ENCODE measurements at regions of chrX and their contacts with region 1.

Region 1: DNA sequence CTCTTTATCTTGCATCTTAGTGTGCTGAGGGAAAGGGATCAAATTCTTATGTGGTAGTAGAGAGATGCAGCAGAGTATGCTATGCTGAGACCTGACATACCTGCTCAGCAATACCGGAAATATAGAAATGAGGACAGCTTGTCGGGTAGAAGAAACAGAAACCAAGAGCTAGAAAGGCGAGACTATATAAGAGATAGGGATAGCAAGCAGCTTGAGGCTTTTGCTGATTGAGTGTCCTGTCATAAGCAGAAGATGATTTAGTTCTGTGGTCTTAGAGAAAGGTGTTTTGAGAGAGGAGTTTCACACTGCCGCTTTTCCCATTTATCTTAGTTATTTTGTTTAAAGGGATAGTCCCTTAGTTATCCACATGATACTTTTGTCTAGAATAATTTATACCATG is 31.7 kb downstream of the USP9X start:
- DNase-seq: peak; percentile 71
- H3K4me3 Mint-ChIP-seq: peak overlapping the region; percentile 58
- H3K27ac Mint-ChIP-seq: peak overlapping the region; percentile 78
- H3K4me1 Mint-ChIP-seq: peaks cover 48% of the 10 kb centered on the region
- H3K27me3 Mint-ChIP-seq: no peaks in the 10 kb centered on the region

Region 2: DNA sequence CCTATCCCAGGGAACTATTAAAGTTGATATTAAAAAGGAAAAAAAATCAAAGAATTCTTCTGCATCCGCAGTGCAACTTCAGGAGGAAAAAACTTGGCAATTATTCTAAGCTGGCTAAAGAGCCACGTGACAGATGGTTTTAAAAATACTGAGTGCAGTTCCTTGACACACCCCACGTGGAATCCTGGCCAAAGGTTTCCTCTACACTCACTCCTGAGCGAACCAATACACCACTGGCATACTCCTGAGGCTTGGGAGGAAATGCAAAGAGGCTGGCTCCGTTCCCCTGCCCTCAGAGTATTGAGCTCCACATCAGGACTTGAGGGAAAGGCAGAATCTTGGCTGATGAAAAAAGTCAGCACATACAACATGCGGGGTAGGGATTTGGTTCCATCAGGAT is 670.0 kb before region 1 on chrX:
- intact Hi-C with region 1: no loop called
- DNase-seq: no peak
- H3K4me3 Mint-ChIP-seq: no peak overlapping the region
- H3K27ac Mint-ChIP-seq: no peak overlapping the region
- H3K4me1 Mint-ChIP-seq: no peaks in the 10 kb centered on the region
- H3K27me3 Mint-ChIP-seq: no peaks in the 10 kb centered on the region

Region 3: DNA sequence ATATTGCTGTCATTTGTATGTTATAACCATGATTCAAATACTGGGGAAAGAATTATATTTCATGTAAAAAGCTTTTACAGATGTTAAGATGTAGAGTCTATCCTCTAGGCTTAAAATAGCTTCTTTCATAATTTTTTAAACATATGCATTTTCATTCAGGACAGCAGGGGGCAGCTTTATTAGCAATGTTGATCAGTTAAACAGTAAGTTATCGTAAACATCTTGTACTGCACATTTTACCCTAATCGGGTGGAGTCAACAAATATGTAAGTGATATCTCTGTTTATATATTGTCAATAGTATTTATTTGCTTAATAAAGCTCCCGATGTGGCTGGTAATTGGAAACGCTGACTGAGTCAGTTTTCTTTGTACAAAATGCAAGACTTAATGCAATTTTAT is 239.1 kb before region 1 on chrX:
- intact Hi-C with region 1: loop called (anchors 2 kb)
- DNase-seq: peak; percentile 60
- H3K4me3 Mint-ChIP-seq: no peak overlapping the region
- H3K27ac Mint-ChIP-seq: no peak overlapping the region
- H3K4me1 Mint-ChIP-seq: no peaks in the 10 kb centered on the region
- H3K27me3 Mint-ChIP-seq: no peaks in the 10 kb centered on the region

Region 4: DNA sequence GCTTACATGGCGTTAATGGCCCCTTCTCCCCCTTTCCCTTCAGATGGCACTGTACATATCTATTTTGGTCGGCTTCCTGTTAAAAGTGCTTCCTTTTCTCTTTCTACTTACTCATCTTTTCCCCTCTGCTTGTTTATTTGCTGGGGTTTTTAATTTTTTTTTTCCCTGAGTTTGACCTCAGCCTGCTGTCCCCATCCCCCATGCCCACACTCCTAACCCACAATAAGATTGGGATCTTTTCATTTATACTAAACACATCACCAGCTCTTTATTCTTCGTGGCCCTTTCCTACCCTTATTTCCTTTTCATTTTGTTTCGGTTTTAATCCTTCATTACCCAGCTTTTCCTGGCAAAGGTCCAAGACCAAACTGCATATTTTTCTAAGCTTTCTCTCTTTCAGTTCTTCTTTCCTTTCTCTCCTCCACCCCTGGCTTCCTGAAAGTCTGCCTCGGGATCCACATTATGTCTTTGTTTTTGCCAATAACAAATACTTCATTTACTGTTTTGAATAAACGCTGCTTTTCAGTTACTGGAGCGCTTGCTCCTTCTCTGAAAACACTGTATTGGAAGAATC is 183.7 kb before region 1 on chrX:
- intact Hi-C with region 1: loop called (anchors 2 kb)
- DNase-seq: peak; percentile 72
- H3K4me3 Mint-ChIP-seq: peak overlapping the region; percentile 79
- H3K27ac Mint-ChIP-seq: peak overlapping the region; percentile 95
- H3K4me1 Mint-ChIP-seq: peaks cover 18% of the 10 kb centered on the region
- H3K27me3 Mint-ChIP-seq: no peaks in the 10 kb centered on the region

Region 5: GRCh38 chrX:41010188-41010846 is 106.6 kb before region 1 on chrX:
- intact Hi-C with region 1: loop called (anchors 10 kb)
- DNase-seq: peak; percentile 88
- H3K4me3 Mint-ChIP-seq: peak overlapping the region; percentile 69
- H3K27ac Mint-ChIP-seq: peak overlapping the region; percentile 88
- H3K4me1 Mint-ChIP-seq: peaks cover 19% of the 10 kb centered on the region
- H3K27me3 Mint-ChIP-seq: no peaks in the 10 kb centered on the region

Region 6: DNA sequence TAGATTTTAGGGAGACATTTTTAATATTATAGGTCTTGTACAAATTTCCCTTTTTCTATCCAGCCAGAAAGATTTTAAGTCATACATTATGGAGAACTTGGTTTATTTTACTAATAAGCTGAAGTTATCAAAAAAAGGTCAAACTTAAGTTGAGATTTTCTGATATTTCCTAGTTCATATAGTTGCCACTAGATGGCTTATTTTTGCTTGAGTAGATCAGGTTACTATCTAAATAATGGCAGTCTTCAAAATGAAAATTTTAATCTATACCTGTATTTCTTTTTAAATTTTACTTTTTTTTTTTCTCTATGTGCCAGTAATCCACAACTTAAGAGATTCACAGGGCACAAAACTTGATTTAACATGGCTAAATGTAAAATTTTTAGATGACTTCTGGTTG is 20.6 kb after region 1 on chrX:
- intact Hi-C with region 1: no loop called
- DNase-seq: no peak
- H3K4me3 Mint-ChIP-seq: no peak overlapping the region
- H3K27ac Mint-ChIP-seq: no peak overlapping the region
- H3K4me1 Mint-ChIP-seq: no peaks in the 10 kb centered on the region
- H3K27me3 Mint-ChIP-seq: no peaks in the 10 kb centered on the region

Measured in activated CD4-positive, alpha-beta T cell treated with anti-CD3 and anti-CD28 coated beads, Interleukin-2, amount 10 ng/mL, durations not matched to agents 24 days and 14 days (primary cell).